ENCODE measurements at regions of chr2 and their contacts with region 1.

Region 1: GRCh38 chr2:46461011-46461674 is 18.2 kb upstream of the TMEM247 start:
- DNase-seq: peak; percentile 57 to 78 (median 65)
- H3K4me3 ChIP-seq: no peak overlapping the region
- H3K4me3 Mint-ChIP-seq: no peak overlapping the region
- H3K27ac ChIP-seq: no peak overlapping the region
- H3K27ac Mint-ChIP-seq: peak overlapping the region in 3 of 8 donors; percentile 44 to 57 (median 47)
- H3K4me1 ChIP-seq: peaks cover 5% of the 10 kb centered on the region
- H3K4me1 Mint-ChIP-seq: peaks cover 10 to 13% (median 12%) of the 10 kb centered on the region in 3 donors
- H3K27me3 ChIP-seq: no peaks in the 10 kb centered on the region
- H3K27me3 Mint-ChIP-seq: peaks cover 0 to 1% of the 10 kb centered on the region in 2 donors

Region 2: DNA sequence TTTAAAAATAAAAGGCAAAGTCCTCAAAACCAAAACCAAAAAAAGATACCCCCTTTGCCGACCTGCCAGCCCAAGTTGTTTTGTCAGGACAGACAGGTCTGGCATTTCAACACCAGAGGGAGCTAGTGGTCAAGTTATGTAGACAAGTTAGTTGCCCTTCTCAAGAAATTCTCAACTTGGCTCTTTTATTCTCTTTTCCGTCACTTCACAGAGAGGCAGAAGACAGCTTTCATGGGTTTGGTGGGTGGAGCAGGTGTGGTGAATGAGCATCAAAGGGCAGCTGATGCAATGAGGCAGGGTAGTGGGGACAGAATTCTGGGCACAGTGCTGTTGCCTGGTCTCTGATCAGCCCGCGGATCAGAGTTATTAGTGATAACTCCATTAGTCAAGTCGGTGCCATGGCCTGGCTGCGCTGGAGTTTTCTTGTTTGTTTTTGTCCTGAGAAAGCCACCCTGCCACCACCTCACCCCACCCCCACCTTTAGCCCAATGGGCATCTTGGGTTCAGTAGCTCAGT is 467.6 kb before region 1 on chr2:
- CTCF ChIA-PET with region 1: interaction called, 12 read pairs
- POLR2A ChIA-PET with region 1: no interaction called
- DNase-seq: peak; percentile 20 to 58 (median 45)
- H3K4me3 ChIP-seq: no peak overlapping the region
- H3K4me3 Mint-ChIP-seq: no peak overlapping the region
- H3K27ac ChIP-seq: no peak overlapping the region
- H3K27ac Mint-ChIP-seq: no peak overlapping the region
- H3K4me1 ChIP-seq: no peaks in the 10 kb centered on the region
- H3K4me1 Mint-ChIP-seq: peaks cover 5 to 7% (median 6%) of the 10 kb centered on the region in 3 donors
- H3K27me3 ChIP-seq: no peaks in the 10 kb centered on the region
- H3K27me3 Mint-ChIP-seq: no peaks in the 10 kb centered on the region

Region 3: DNA sequence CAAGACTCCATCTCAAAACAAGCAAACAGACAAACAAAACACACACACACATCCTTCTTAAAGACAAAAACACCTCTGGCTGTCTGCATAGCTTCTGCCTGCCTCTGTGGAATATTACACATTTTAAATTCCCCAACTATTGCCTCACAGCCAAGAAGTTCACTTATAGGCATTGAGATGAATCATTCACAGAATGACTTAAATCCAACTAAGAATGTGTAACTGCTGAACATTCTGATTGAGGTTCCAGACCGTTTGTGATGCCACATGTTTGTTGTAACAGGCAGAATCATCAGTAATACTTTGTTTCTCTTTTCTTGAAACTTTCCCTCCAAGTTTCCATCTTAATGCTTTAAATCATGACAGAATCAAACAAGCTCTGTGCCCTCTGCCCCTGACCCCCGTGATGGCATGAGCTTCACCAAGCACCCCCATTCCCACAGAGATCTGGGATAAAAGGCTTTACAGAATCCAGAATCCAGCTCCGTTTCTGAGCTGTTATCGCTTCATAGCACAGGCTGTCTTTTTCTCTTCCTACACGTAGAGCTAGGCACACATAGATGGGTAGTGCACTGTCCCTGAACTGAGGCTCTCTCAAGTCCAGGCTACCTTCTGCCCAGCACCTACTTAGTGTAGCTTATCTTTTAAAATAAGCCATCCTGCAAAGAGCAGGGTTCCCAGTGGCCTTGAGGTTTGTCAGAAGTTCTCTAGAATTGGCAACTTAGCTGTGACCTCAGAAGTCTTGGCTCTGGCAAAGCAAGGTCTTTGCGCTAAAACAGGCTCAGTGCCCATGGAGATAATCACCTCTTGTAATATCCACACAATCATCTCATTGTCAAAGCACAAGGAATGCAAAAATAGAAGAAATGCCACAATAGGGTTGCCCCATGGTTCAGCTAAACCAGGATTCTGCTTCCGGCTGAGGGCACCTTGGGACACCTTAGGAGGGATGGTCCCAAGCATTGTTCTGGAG is 131.1 kb before region 1 on chr2:
- CTCF ChIA-PET with region 1: no interaction called
- POLR2A ChIA-PET with region 1: no interaction called
- DNase-seq: no peak
- H3K4me3 ChIP-seq: no peak overlapping the region
- H3K4me3 Mint-ChIP-seq: no peak overlapping the region
- H3K27ac ChIP-seq: no peak overlapping the region
- H3K27ac Mint-ChIP-seq: no peak overlapping the region
- H3K4me1 ChIP-seq: no peaks in the 10 kb centered on the region
- H3K4me1 Mint-ChIP-seq: peaks cover 0 to 9% (median 4%) of the 10 kb centered on the region in 3 donors
- H3K27me3 ChIP-seq: no peaks in the 10 kb centered on the region
- H3K27me3 Mint-ChIP-seq: peaks cover 0 to 6% of the 10 kb centered on the region in 2 donors